Activated CD8-positive, alpha-beta T cell treated with anti-CD3 and anti-CD28 coated beads for 36 hours (primary cell): ENCODE measurements at regions of chr2 and their contacts with region 1.

Region 1: DNA sequence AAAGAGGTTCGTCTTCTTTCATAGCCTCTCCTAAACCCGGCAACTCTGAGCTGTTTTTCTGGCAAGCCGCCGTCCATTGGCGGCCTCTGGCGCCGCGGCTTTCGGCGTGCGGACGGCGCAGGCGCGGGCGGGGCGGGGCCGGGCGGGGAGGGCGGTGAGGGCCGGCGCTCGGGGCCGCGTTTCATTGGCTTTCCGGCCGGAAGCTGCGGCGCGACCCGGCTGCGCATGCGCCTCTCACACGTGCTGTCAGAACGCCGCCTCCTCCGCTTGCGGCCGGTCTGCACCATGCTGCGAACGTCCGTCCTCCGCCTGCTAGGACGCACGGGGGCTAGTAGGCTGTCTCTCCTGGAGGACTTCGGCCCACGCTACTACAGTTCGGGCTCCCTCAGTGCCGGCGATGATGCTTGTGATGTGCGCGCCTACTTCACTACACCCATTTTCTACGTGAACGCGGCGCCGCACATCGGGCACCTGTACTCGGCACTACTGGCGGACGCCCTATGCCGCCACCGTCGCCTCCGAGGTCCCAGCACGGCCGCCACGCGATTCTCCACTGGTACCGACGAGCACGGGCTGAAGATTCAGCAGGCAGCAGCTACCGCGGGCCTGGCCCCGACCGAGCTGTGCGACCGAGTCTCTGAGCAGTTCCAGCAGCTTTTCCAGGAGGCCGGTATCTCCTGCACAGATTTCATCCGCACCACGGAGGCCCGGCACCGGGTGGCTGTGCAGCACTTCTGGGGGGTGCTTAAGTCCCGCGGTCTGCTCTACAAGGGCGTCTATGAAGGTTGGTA is at the start of gene MARS2:
- DNase-seq: peak; percentile 92
- ATAC-seq: peak; percentile 84
- H3K4me3 Mint-ChIP-seq: peak within 1 kb of the TSS; percentile 78
- H3K27ac Mint-ChIP-seq: peak within 1 kb of the TSS; percentile 98
- H3K4me1 Mint-ChIP-seq: peaks cover 36% of the 10 kb centered on the region
- H3K27me3 Mint-ChIP-seq: no peaks in the 10 kb centered on the region
- CTCF ChIP-seq: no peak
- total RNA-seq, gene MARS2: 15.3 to 16.7 TPM

Region 2: GRCh38 chr2:197777823-197778407 is 72.6 kb after region 1 on chr2:
- CTCF ChIA-PET with region 1: interaction called, 24 read pairs
- POLR2A ChIA-PET with region 1: no interaction called
- intact Hi-C with region 1: loop called (anchors 2 kb)
- DNase-seq: peak; percentile 15
- ATAC-seq: no peak
- H3K4me3 Mint-ChIP-seq: no peak overlapping the region
- H3K27ac Mint-ChIP-seq: no peak overlapping the region
- H3K4me1 Mint-ChIP-seq: no peaks in the 10 kb centered on the region
- H3K27me3 Mint-ChIP-seq: peaks cover 2% of the 10 kb centered on the region
- CTCF ChIP-seq: peak; percentile 97